ENCODE measurements at regions of chr17 and their contacts with region 1.

Region 1: GRCh38 chr17:3531266-3532101 is 26.1 kb downstream of the TRPV3 start:
- DNase-seq: no peak
- ATAC-seq: peak in 3 of 4 donors; percentile 36 to 62 (median 44)
- H3K4me3 ChIP-seq: no peak overlapping the region
- H3K27ac ChIP-seq: no peak overlapping the region
- H3K4me1 ChIP-seq: no peaks in the 10 kb centered on the region
- H3K27me3 ChIP-seq: no peaks in the 10 kb centered on the region
- CTCF ChIP-seq: no peak

Region 2: GRCh38 chr17:3335884-3336283 is 195.6 kb before region 1 on chr17:
- intact Hi-C with region 1: no loop called
- DNase-seq: no peak
- ATAC-seq: no peak
- H3K4me3 ChIP-seq: no peak overlapping the region
- H3K27ac ChIP-seq: no peak overlapping the region
- H3K4me1 ChIP-seq: no peaks in the 10 kb centered on the region
- H3K27me3 ChIP-seq: no peaks in the 10 kb centered on the region
- CTCF ChIP-seq: no peak

Region 3: GRCh38 chr17:3385869-3386816 is 145.3 kb before region 1 on chr17 and contains the start of gene OR3A2:
- intact Hi-C with region 1: no loop called
- DNase-seq: no peak
- ATAC-seq: no peak
- H3K4me3 ChIP-seq: no peak within 1 kb of the TSS
- H3K27ac ChIP-seq: no peak within 1 kb of the TSS
- H3K4me1 ChIP-seq: no peaks in the 10 kb centered on the region
- H3K27me3 ChIP-seq: peaks cover 0 to 22% (median 5%) of the 10 kb centered on the region in 3 donors
- CTCF ChIP-seq: no peak
- total RNA-seq, gene OR3A2: 0.36 to 0.40 TPM in 2 of 4 donors, not detected in the others

Region 4: GRCh38 chr17:3472137-3472536 is 59.3 kb before region 1 on chr17:
- intact Hi-C with region 1: no loop called
- DNase-seq: no peak
- ATAC-seq: no peak
- H3K4me3 ChIP-seq: no peak overlapping the region
- H3K27ac ChIP-seq: no peak overlapping the region
- H3K4me1 ChIP-seq: no peaks in the 10 kb centered on the region
- H3K27me3 ChIP-seq: no peaks in the 10 kb centered on the region
- CTCF ChIP-seq: no peak

Region 5: GRCh38 chr17:3556916-3557750 is 25.6 kb after region 1 on chr17:
- intact Hi-C with region 1: loop called in 1 of 2 experiments (anchors 1 kb)
- DNase-seq: no peak
- ATAC-seq: peak; percentile 64 to 86 (median 66)
- H3K4me3 ChIP-seq: peak overlapping the region; percentile 29
- H3K27ac ChIP-seq: peak overlapping the region; percentile 11
- H3K4me1 ChIP-seq: no peaks in the 10 kb centered on the region
- H3K27me3 ChIP-seq: no peaks in the 10 kb centered on the region
- CTCF ChIP-seq: no peak

Measured in psoas muscle (tissue), 8 donors.